PC-9 (cell line): ENCODE measurements at regions of chr1 and their contacts with region 1.

Region 1: DNA sequence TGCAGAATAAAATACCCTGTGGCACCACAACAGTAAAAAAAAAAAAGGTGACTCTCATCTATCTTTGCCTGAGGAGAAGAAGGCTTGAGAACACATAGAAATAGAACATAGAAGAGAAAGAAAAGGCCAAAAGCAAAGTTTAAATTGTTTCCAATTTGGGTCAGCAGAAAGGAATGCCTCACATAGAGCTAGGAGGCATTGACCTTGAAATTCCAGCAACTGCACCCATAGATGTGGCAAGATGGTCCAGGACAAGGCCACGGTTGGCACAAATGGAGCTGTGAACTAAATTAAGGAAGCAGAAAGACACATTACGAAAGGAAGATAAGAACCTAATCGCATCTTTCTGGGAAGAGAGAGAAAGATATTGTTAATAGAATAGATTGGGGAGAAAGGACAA is 588.3 kb downstream of the LMO4 start:
- DNase-seq: no peak
- H3K4me3 ChIP-seq: no peak overlapping the region
- H3K27ac ChIP-seq: no peak overlapping the region
- H3K4me1 ChIP-seq: no peaks in the 10 kb centered on the region
- H3K27me3 ChIP-seq: no peaks in the 10 kb centered on the region
- CTCF ChIP-seq: no peak

Region 2: GRCh38 chr1:86277936-86278335 is 1639.0 kb before region 1 on chr1:
- CTCF ChIA-PET with region 1: no interaction called
- POLR2A ChIA-PET with region 1: interaction called, 12 read pairs
- intact Hi-C with region 1: no loop called
- DNase-seq: no peak
- H3K4me3 ChIP-seq: no peak overlapping the region
- H3K27ac ChIP-seq: no peak overlapping the region
- H3K4me1 ChIP-seq: no peaks in the 10 kb centered on the region
- H3K27me3 ChIP-seq: no peaks in the 10 kb centered on the region
- CTCF ChIP-seq: no peak

Region 3: GRCh38 chr1:87853576-87854351 is 63.2 kb before region 1 on chr1:
- CTCF ChIA-PET with region 1: no interaction called
- POLR2A ChIA-PET with region 1: no interaction called
- intact Hi-C with region 1: no loop called
- DNase-seq: no peak
- H3K4me3 ChIP-seq: no peak overlapping the region
- H3K27ac ChIP-seq: no peak overlapping the region
- H3K4me1 ChIP-seq: no peaks in the 10 kb centered on the region
- H3K27me3 ChIP-seq: no peaks in the 10 kb centered on the region
- CTCF ChIP-seq: no peak

Region 4: GRCh38 chr1:88022516-88022915 is 105.6 kb after region 1 on chr1:
- CTCF ChIA-PET with region 1: no interaction called
- POLR2A ChIA-PET with region 1: no interaction called
- intact Hi-C with region 1: no loop called
- DNase-seq: peak in 1 of 2 experiments; percentile 21
- H3K4me3 ChIP-seq: no peak overlapping the region
- H3K27ac ChIP-seq: no peak overlapping the region
- H3K4me1 ChIP-seq: no peaks in the 10 kb centered on the region
- H3K27me3 ChIP-seq: no peaks in the 10 kb centered on the region
- CTCF ChIP-seq: no peak